ENCODE measurements at regions of chr13 and their contacts with region 1.

Region 1: GRCh38 chr13:67308004-67308772 is 78.1 kb upstream of the PCDH9 start:
- DNase-seq: no peak
- ATAC-seq: no peak

Region 2: GRCh38 chr13:67285611-67286010 is 22.6 kb before region 1 on chr13:
- intact Hi-C with region 1: loop called (anchors 2 kb)
- DNase-seq: no peak
- ATAC-seq: peak; percentile 34

Region 3: GRCh38 chr13:67538906-67539305 is 230.7 kb after region 1 on chr13:
- intact Hi-C with region 1: no loop called
- DNase-seq: no peak
- ATAC-seq: no peak

Measured in Right ventricle myocardium inferior (tissue), 1 donor.